ENCODE measurements at regions of chrX and their contacts with region 1.

Region 1: GRCh38 chrX:13487731-13488523 is 81.5 kb upstream of the EGFL6 start:
- DNase-seq: peak; percentile 93
- H3K4me3 ChIP-seq: no peak overlapping the region
- H3K27ac ChIP-seq: peak overlapping the region; percentile 84
- H3K4me1 ChIP-seq: peaks cover 35% of the 10 kb centered on the region
- H3K27me3 ChIP-seq: no peaks in the 10 kb centered on the region
- CTCF ChIP-seq: peak; percentile 52 to 70

Region 2: GRCh38 chrX:12814420-12814819 is 673.5 kb before region 1 on chrX:
- CTCF ChIA-PET with region 1: interaction called, 8 read pairs
- dilution Hi-C with region 1: no loop called
- in situ Hi-C with region 1: loop called (anchors 25 kb)
- intact Hi-C with region 1: loop called (anchors 1 kb)
- DNase-seq: peak; percentile 40
- H3K4me3 ChIP-seq: no peak overlapping the region
- H3K27ac ChIP-seq: no peak overlapping the region
- H3K4me1 ChIP-seq: peaks cover 8% of the 10 kb centered on the region
- H3K27me3 ChIP-seq: no peaks in the 10 kb centered on the region
- CTCF ChIP-seq: peak; percentile 49 to 69

Region 3: GRCh38 chrX:12974796-12975669 is 512.9 kb before region 1 on chrX and contains the start of gene TMSB4X:
- CTCF ChIA-PET with region 1: interaction called, 5 read pairs
- dilution Hi-C with region 1: no loop called
- in situ Hi-C with region 1: no loop called
- intact Hi-C with region 1: loop called (anchors 1 kb)
- DNase-seq: peak; percentile 76
- H3K4me3 ChIP-seq: peak within 1 kb of the TSS; percentile 79 to 87 (median 80)
- H3K27ac ChIP-seq: peak within 1 kb of the TSS; percentile 93
- H3K4me1 ChIP-seq: peaks cover 7% of the 10 kb centered on the region
- H3K27me3 ChIP-seq: no peaks in the 10 kb centered on the region
- CTCF ChIP-seq: no peak
- total RNA-seq, gene TMSB4X: 1,481 to 1,998 TPM

Region 4: DNA sequence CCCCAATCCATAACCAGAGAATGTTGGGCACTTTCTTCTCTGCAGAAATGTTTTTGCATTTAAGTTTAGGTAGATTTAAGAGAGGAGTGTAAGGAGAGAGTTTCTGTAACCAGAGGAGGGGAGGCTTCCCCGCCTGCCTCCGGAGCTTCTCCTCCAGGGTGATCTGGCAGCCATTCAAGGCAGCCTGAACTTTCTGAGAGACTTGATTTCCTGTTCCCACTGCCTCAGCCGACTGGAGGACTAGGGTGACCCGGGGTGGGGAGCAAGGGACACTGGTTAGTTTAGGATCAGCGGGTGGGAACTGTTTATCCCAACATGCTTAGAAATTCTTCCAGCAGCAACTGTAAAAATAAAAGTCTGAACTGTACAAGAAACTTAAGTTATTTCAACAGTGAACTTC is 458.6 kb before region 1 on chrX:
- CTCF ChIA-PET with region 1: no interaction called
- dilution Hi-C with region 1: no loop called
- in situ Hi-C with region 1: no loop called
- intact Hi-C with region 1: loop called (anchors 5 kb)
- DNase-seq: no peak
- H3K4me3 ChIP-seq: no peak overlapping the region
- H3K27ac ChIP-seq: no peak overlapping the region
- H3K4me1 ChIP-seq: peaks cover 20% of the 10 kb centered on the region
- H3K27me3 ChIP-seq: no peaks in the 10 kb centered on the region
- CTCF ChIP-seq: no peak

Region 5: GRCh38 chrX:13180807-13181206 is 307.1 kb before region 1 on chrX:
- CTCF ChIA-PET with region 1: interaction called, 7 read pairs
- dilution Hi-C with region 1: no loop called
- in situ Hi-C with region 1: no loop called
- intact Hi-C with region 1: loop called (anchors 2 kb)
- DNase-seq: peak; percentile 89
- H3K4me3 ChIP-seq: no peak overlapping the region
- H3K27ac ChIP-seq: no peak overlapping the region
- H3K4me1 ChIP-seq: peaks cover 26% of the 10 kb centered on the region
- H3K27me3 ChIP-seq: no peaks in the 10 kb centered on the region
- CTCF ChIP-seq: no peak

Region 6: GRCh38 chrX:13283950-13284914 is 203.7 kb before region 1 on chrX:
- CTCF ChIA-PET with region 1: no interaction called
- dilution Hi-C with region 1: no loop called
- in situ Hi-C with region 1: no loop called
- intact Hi-C with region 1: loop called (anchors 2 kb)
- DNase-seq: peak; percentile 84
- H3K4me3 ChIP-seq: no peak overlapping the region
- H3K27ac ChIP-seq: peak overlapping the region; percentile 87
- H3K4me1 ChIP-seq: peaks cover 37% of the 10 kb centered on the region
- H3K27me3 ChIP-seq: no peaks in the 10 kb centered on the region
- CTCF ChIP-seq: no peak

Region 7: GRCh38 chrX:13398073-13398823 is 89.7 kb before region 1 on chrX:
- CTCF ChIA-PET with region 1: interaction called, 3 read pairs
- dilution Hi-C with region 1: no loop called
- in situ Hi-C with region 1: no loop called
- intact Hi-C with region 1: loop called (anchors 1 kb)
- DNase-seq: peak; percentile 100
- H3K4me3 ChIP-seq: no peak overlapping the region
- H3K27ac ChIP-seq: peak overlapping the region; percentile 95
- H3K4me1 ChIP-seq: peaks cover 30% of the 10 kb centered on the region
- H3K27me3 ChIP-seq: no peaks in the 10 kb centered on the region
- CTCF ChIP-seq: no peak

Region 8: GRCh38 chrX:13550346-13550745 is 62.4 kb after region 1 on chrX:
- CTCF ChIA-PET with region 1: no interaction called
- dilution Hi-C with region 1: no loop called
- in situ Hi-C with region 1: no loop called
- intact Hi-C with region 1: no loop called
- DNase-seq: no peak
- H3K4me3 ChIP-seq: no peak overlapping the region
- H3K27ac ChIP-seq: no peak overlapping the region
- H3K4me1 ChIP-seq: no peaks in the 10 kb centered on the region
- H3K27me3 ChIP-seq: no peaks in the 10 kb centered on the region
- CTCF ChIP-seq: no peak